Gastrocnemius medialis (tissue), 4 donors: ENCODE measurements at regions of chr20 and their contacts with region 1.

Region 1: GRCh38 chr20:47392015-47392720 is 35.7 kb upstream of the ZMYND8 start:
- DNase-seq: peak; percentile 25 to 30
- ATAC-seq: peak; percentile 51 to 78
- H3K4me3 ChIP-seq: no peak overlapping the region
- H3K27ac ChIP-seq: peak overlapping the region in 3 of 4 donors; percentile 37 to 77 (median 56)
- H3K4me1 ChIP-seq: peaks cover 0 to 3% of the 10 kb centered on the region in 2 donors
- H3K27me3 ChIP-seq: no peaks in the 10 kb centered on the region
- CTCF ChIP-seq: no peak
- POLR2A ChIP-seq: no peak

Region 2: GRCh38 chr20:46757754-46758678 is 634.2 kb before region 1 on chr20:
- in situ Hi-C with region 1: loop called in 2 of 4 experiments (anchors 10 to 25 kb)
- intact Hi-C with region 1: loop called (anchors 10 kb)
- DNase-seq: no peak
- ATAC-seq: peak in 1 of 2 donors; percentile 51
- H3K4me3 ChIP-seq: no peak overlapping the region
- H3K27ac ChIP-seq: no peak overlapping the region
- H3K4me1 ChIP-seq: no peaks in the 10 kb centered on the region
- H3K27me3 ChIP-seq: no peaks in the 10 kb centered on the region
- CTCF ChIP-seq: peak; percentile 45 to 78 (median 62)
- POLR2A ChIP-seq: no peak

Region 3: GRCh38 chr20:47196091-47197081 is 195.8 kb before region 1 on chr20:
- in situ Hi-C with region 1: loop called in 2 of 4 experiments (anchors 5 to 10 kb)
- intact Hi-C with region 1: no loop called
- DNase-seq: peak; percentile 13 to 45
- ATAC-seq: peak; percentile 47 to 66
- H3K4me3 ChIP-seq: no peak overlapping the region
- H3K27ac ChIP-seq: no peak overlapping the region
- H3K4me1 ChIP-seq: no peaks in the 10 kb centered on the region
- H3K27me3 ChIP-seq: no peaks in the 10 kb centered on the region
- CTCF ChIP-seq: peak; percentile 87 to 97 (median 91)
- POLR2A ChIP-seq: no peak

Region 4: DNA sequence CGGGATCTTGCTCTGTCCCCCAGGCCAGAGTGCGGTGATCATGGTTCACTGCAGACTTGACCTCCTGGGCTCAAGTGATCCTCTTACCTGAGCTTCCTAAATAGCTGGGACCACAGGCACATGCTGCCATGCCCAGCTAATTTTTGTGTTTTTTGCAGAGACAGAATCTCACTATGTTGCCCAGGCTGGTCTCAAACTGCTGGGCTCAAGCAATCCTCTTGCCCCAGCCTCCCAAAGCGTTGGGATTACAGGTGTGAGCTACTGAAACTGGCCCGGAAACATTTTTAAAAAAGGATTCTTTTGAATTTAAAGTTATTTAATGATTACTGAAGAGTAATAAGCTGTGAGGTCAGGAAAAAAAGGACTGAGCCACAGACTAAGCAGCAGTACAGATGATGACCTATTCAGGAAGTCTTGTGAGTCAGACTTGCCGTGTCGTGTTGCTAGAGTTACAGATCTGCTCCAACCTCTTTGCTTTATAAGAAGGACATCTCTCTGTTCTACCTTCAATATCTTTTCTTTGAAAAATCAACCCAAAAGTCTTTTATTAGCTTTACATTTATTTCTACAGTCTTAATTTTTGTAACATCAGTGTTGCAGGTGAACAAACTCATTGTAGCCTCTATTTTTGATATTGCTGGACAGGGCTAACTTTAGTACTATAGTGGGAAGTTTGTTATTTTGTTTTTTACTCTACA is 218.2 kb after region 1 on chr20:
- in situ Hi-C with region 1: loop called in 2 of 4 experiments (anchors 10 to 25 kb)
- intact Hi-C with region 1: no loop called
- DNase-seq: peak in 1 of 2 donors; percentile 13
- ATAC-seq: peak; percentile 86 to 90
- H3K4me3 ChIP-seq: no peak overlapping the region
- H3K27ac ChIP-seq: peak overlapping the region in 3 of 4 donors; percentile 32 to 52 (median 36)
- H3K4me1 ChIP-seq: peaks cover 17 to 56% of the 10 kb centered on the region in 2 donors
- H3K27me3 ChIP-seq: no peaks in the 10 kb centered on the region
- CTCF ChIP-seq: no peak
- POLR2A ChIP-seq: no peak

Region 5: GRCh38 chr20:47620808-47621805 is 228.9 kb after region 1 on chr20:
- in situ Hi-C with region 1: loop called (anchors 5 to 25 kb)
- intact Hi-C with region 1: no loop called
- DNase-seq: no peak
- ATAC-seq: peak in 1 of 2 donors; percentile 53
- H3K4me3 ChIP-seq: no peak overlapping the region
- H3K27ac ChIP-seq: peak overlapping the region; percentile 19 to 40 (median 30)
- H3K4me1 ChIP-seq: peaks cover 13 to 25% of the 10 kb centered on the region in 2 donors
- H3K27me3 ChIP-seq: no peaks in the 10 kb centered on the region
- CTCF ChIP-seq: peak; percentile 61 to 92 (median 84)
- POLR2A ChIP-seq: no peak